ENCODE measurements at regions of chr16 and their contacts with region 1.

Region 1: GRCh38 chr16:31713071-31713944 is 160.3 kb upstream of the ZNF267 start:
- DNase-seq: peak; percentile 85
- ATAC-seq: peak; percentile 92
- H3K4me3 Mint-ChIP-seq: peak overlapping the region; percentile 99
- H3K27ac Mint-ChIP-seq: peak overlapping the region; percentile 99
- H3K4me1 Mint-ChIP-seq: peaks cover 33% of the 10 kb centered on the region
- H3K27me3 Mint-ChIP-seq: no peaks in the 10 kb centered on the region

Region 2: GRCh38 chr16:31700526-31701388 is 12.6 kb before region 1 on chr16:
- POLR2A ChIA-PET with region 1: interaction called, 68 read pairs
- DNase-seq: peak; percentile 87
- ATAC-seq: peak; percentile 82
- H3K4me3 Mint-ChIP-seq: peak overlapping the region; percentile 92
- H3K27ac Mint-ChIP-seq: peak overlapping the region; percentile 85
- H3K4me1 Mint-ChIP-seq: peaks cover 29% of the 10 kb centered on the region
- H3K27me3 Mint-ChIP-seq: no peaks in the 10 kb centered on the region

Region 3: GRCh38 chr16:31785126-31785525 is 71.8 kb after region 1 on chr16:
- POLR2A ChIA-PET with region 1: no interaction called
- DNase-seq: no peak
- ATAC-seq: no peak
- H3K4me3 Mint-ChIP-seq: no peak overlapping the region
- H3K27ac Mint-ChIP-seq: no peak overlapping the region
- H3K4me1 Mint-ChIP-seq: no peaks in the 10 kb centered on the region
- H3K27me3 Mint-ChIP-seq: no peaks in the 10 kb centered on the region

Region 4: DNA sequence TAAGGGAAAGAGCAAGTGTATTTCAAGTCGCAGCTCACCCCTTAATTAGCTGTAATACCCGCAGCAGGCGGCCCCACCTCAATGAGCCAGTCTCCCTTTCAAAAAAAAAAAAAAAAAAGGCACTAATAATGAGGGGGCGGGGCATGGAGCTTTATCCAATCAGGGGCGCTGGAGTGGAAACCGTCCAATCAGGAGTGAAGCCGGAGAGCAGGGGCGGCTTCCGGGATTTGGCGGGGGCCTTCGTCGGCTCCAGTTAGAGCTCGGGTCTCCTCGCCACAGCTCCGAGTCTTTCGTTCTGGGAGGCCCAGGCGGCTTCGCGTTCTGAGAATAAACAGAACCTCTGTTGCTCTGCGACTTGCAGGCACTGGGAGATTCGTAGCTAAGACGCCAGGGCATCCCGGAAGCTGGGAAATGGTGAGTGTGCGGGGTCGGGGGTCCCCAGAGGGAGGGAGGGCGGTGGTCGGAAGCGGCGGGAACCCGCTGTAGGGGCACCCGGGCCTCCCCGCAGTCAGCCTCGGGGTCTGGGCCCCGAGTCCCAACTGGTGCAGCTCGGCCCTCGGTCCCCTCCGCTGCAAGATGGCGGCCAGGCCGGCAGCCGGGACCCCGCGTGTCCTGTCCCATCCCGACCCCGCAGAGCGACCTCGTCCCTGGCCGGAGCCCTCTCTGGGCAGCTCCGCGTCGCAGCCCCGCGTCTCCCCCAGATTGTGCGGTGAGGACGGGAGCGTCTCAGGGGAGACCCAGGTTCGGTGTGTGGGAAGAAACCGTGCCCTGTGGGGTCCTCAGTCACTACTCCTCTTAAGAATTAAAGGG is 160.5 kb after region 1 on chr16 and contains the start of gene ZNF267:
- POLR2A ChIA-PET with region 1: interaction called, 23 read pairs
- DNase-seq: peak; percentile 84
- ATAC-seq: peak; percentile 66
- H3K4me3 Mint-ChIP-seq: peak within 1 kb of the TSS; percentile 91
- H3K27ac Mint-ChIP-seq: peak within 1 kb of the TSS; percentile 97
- H3K4me1 Mint-ChIP-seq: peaks cover 63% of the 10 kb centered on the region
- H3K27me3 Mint-ChIP-seq: no peaks in the 10 kb centered on the region
- total RNA-seq, gene ZNF267: 60.9 to 62.6 TPM

Measured in activated naive CD8-positive, alpha-beta T cell treated with anti-CD3 and anti-CD28 coated beads, Interleukin-2, amount 10 ng/mL, durations not matched to agents 7 days and 5 days (primary cell).